ENCODE measurements at regions of chr7 and their contacts with region 1.

Region 1: DNA sequence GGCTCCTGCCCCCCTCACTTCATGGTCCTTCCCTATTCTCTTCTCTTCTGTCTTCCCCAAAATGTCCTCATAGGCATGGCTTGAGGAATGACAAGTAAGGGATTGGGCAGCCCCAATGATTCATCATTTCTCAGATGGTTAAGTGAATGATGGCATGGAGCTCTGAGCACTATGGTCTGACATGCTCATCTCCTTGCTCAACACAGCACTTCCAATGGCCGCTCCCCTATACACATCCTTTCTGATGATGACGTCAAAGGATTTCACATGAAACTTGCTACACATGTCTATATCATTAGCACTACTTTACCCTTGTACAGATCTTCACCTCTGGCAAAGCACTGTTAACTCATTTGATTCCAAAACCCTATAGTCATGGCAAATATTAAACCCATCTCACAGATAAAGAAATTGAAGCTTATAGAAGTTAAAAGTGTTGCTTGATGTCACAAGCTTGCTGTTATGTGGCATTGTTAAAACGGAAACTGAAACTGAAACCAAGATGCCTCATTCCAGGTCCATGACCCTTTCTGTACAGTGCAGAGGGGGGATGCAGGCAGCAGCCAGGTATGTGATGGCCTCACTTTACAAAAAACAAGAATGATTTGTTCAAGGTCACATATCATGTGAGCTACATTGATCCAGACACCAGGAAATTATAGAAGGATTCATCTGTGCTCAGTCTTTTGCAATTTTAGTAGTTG is 90.0 kb upstream of the PLXNA4 start:
- DNase-seq: peak; percentile 45
- ATAC-seq: peak; percentile 91
- H3K4me3 Mint-ChIP-seq: no peak overlapping the region
- H3K27ac Mint-ChIP-seq: peak overlapping the region; percentile 73
- H3K4me1 Mint-ChIP-seq: peaks cover 12% of the 10 kb centered on the region
- H3K27me3 Mint-ChIP-seq: no peaks in the 10 kb centered on the region

Region 2: GRCh38 chr7:132654150-132654549 is 12.1 kb before region 1 on chr7:
- CTCF ChIA-PET with region 1: interaction called, 21 read pairs
- DNase-seq: no peak
- ATAC-seq: no peak
- H3K4me3 Mint-ChIP-seq: no peak overlapping the region
- H3K27ac Mint-ChIP-seq: peak overlapping the region; percentile 54
- H3K4me1 Mint-ChIP-seq: peaks cover 39% of the 10 kb centered on the region
- H3K27me3 Mint-ChIP-seq: no peaks in the 10 kb centered on the region

Measured in activated CD8-positive, alpha-beta memory T cell treated with anti-CD3 and anti-CD28 coated beads, Interleukin-2, amount 10 ng/mL, durations not matched to agents 7 days and 5 days (primary cell).